Activated T-helper 1 cell treated with anti-CD3 and anti-CD28 coated beads, Interleukin-12 subunit alpha, Interleukin-12 subunit beta, Interleukin-2, Interleukin-4 antibody, amounts not matched to agents 30 ng/mL and 10 ng/mL and 1 ng/mL, durations not matched to agents 14 hours and 24 hours and 36 hours (primary cell): ENCODE measurements at regions of chr15 and their contacts with region 1.

Region 1: DNA sequence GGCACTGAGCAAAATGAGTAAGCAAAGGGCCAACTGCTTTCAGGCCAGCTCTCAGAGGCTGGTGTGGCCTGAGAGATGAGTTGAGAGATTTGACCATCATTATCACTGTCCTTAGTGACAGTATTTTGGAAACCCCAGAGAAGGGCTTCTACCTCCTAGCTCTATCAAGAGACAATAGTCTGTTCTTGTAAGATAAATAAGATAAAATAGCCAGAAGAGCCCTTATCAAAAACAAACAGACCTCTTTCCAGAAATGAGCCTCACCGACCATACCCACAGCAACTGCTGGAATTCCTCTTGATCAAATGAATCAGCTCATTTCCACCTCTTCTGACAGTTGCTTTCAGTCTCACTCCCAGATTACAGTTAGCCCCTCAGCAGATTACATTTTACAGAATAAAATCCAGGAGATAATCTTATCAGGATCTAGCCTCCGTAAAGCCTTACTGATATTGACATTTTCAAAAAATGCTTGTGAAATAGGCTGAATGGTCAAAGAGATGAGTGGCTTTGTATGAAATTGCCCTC is 4.5 kb downstream of the HDC start:
- DNase-seq: no peak
- H3K4me3 Mint-ChIP-seq: peak overlapping the region; percentile 66
- H3K27ac Mint-ChIP-seq: peak overlapping the region; percentile 98
- H3K4me1 Mint-ChIP-seq: peaks cover 79% of the 10 kb centered on the region
- H3K27me3 Mint-ChIP-seq: no peaks in the 10 kb centered on the region

Region 2: GRCh38 chr15:49282366-49282765 is 978.7 kb before region 1 on chr15:
- intact Hi-C with region 1: loop called (anchors 5 kb)
- DNase-seq: no peak
- H3K4me3 Mint-ChIP-seq: no peak overlapping the region
- H3K27ac Mint-ChIP-seq: no peak overlapping the region
- H3K4me1 Mint-ChIP-seq: peaks cover 24% of the 10 kb centered on the region
- H3K27me3 Mint-ChIP-seq: no peaks in the 10 kb centered on the region

Region 3: DNA sequence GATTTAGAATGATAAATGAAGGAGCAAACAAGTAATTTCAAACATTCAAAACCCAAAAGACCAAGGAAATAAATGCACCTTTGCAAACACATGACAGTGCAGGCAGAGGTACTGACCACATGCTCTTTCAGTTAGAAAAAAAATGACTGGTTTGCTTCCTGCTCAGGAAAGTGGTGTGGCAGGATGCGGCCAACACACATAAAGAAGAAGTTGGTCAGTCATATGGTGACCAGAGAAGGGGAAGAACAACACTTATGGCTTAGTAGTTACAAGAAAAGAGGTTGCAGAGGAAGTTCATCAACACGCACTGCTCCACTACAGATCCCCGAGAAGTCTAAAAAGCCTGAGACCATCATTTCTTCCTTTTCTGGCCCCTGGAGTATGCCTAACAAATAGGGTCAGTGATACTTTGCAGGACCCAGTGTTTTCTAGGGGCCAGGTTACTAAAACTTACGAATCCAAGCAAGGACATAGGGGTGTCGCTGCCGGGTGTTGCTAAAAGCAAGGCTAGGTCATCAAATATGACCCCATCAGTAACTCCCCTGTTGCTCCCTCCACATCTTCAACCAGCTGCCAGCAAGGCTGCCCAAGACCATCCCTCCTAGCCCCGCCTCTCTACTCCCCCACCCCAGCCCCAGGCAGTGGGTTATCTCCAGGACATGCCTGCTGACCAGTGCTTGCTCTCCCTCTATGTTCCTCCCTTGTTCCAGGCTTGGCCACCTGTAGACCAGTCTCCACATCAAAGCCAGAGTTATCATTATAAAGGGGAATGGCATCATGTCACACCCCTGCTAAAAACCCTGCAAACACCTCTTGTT is 153.2 kb before region 1 on chr15:
- intact Hi-C with region 1: loop called (anchors 1 kb)
- DNase-seq: peak; percentile 44
- H3K4me3 Mint-ChIP-seq: peak overlapping the region; percentile 75
- H3K27ac Mint-ChIP-seq: peak overlapping the region; percentile 93
- H3K4me1 Mint-ChIP-seq: peaks cover 93% of the 10 kb centered on the region
- H3K27me3 Mint-ChIP-seq: no peaks in the 10 kb centered on the region

Region 4: DNA sequence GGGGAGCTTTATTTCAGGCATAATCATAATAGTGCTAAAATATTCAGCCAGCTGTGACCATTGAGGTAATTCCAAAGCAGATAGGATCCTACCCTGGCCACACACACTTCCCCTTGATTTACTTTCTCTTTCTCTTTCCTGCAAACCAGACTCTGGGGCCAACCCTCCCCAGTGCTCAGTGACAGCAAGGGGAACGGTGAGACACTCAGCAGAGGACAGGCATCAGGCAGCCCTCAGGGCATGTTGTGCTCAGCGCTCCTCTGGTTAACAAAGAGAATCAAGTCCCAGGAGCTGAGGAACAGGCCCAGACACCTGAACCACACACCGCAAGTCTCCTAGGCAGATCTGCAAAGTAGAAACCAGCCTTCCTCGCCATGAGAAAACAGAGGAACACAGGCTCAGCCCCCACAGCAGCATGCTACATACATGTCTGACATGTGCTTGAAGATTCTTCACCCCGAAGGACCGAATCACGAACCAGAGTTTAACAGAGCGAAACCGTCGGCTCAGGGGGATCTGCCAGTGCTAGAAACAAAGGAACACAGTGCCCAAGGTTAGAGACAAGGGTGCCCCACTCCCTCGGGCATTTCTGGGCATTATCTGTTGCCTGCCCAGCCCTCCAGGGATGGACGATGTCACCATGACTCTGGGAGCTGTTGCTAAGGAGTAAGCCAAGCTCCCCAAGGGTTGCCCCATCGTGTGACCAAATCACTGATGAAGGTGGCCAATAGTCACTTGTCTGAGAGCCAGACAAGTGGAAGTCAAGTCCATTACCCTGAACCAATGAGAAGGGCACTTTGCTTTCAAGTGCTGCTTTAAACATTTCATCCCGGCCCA is 13.0 kb before region 1 on chr15:
- intact Hi-C with region 1: loop called (anchors 1 kb)
- DNase-seq: peak; percentile 59
- H3K4me3 Mint-ChIP-seq: peak overlapping the region; percentile 67
- H3K27ac Mint-ChIP-seq: peak overlapping the region; percentile 97
- H3K4me1 Mint-ChIP-seq: peaks cover 65% of the 10 kb centered on the region
- H3K27me3 Mint-ChIP-seq: no peaks in the 10 kb centered on the region

Region 5: DNA sequence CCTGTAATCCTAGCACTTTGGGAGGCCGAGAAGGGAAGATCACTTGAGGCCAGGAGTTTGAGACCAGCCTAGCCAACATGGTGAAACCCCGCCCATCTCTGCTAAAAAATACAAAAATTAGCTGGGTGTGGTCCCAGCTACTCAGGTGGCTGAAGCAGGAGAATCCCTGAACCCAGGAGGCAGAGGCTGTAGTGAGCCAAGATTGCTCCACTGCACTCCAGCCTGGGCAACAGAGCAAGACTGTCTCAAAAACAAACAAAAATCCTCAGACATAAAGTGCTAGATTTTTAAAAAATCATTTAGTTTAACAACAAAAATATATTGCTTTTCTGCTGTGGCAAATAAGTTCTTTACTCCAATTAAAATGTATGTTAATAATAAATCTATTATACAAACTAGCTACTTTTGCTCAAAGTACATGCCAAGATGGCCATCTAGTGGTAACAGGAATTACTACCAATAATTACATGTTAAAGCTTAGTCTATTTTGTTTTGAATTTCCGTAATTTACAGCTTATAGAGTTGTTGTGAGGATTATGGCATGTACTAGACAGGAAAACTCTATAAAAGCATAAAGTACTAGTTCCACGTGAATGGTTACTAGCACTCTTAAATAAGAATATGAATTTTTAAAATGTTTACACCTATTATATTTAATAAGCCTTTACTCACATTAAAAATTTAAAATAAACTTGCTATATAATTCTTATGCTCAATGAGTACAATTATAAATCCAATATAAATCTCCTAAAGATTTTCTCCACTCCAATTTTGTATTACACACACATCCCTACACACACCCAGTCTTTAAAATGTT is 55.0 kb after region 1 on chr15:
- intact Hi-C with region 1: loop called (anchors 2 kb)
- DNase-seq: no peak
- H3K4me3 Mint-ChIP-seq: no peak overlapping the region
- H3K27ac Mint-ChIP-seq: no peak overlapping the region
- H3K4me1 Mint-ChIP-seq: peaks cover 44% of the 10 kb centered on the region
- H3K27me3 Mint-ChIP-seq: no peaks in the 10 kb centered on the region

Region 6: DNA sequence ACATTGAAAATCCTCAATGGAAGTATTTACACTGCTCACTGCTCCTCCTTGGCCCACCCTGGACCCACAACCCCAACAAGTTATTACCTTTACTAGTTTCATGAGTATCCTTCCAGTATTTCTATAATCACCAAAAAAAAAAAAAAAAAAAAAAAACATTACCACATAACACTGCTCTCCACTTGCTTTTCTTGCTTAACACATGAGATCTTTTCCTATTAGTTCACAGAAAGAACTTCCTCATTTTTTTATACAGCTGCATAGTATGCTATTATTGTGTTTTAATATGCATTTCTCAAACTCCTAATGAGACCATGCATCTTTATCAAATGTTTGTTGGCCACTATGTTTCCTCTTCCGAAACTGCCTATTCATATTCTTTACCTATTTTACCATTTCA is 79.4 kb after region 1 on chr15:
- intact Hi-C with region 1: no loop called
- DNase-seq: no peak
- H3K4me3 Mint-ChIP-seq: no peak overlapping the region
- H3K27ac Mint-ChIP-seq: no peak overlapping the region
- H3K4me1 Mint-ChIP-seq: peaks cover 28% of the 10 kb centered on the region
- H3K27me3 Mint-ChIP-seq: no peaks in the 10 kb centered on the region

Region 7: DNA sequence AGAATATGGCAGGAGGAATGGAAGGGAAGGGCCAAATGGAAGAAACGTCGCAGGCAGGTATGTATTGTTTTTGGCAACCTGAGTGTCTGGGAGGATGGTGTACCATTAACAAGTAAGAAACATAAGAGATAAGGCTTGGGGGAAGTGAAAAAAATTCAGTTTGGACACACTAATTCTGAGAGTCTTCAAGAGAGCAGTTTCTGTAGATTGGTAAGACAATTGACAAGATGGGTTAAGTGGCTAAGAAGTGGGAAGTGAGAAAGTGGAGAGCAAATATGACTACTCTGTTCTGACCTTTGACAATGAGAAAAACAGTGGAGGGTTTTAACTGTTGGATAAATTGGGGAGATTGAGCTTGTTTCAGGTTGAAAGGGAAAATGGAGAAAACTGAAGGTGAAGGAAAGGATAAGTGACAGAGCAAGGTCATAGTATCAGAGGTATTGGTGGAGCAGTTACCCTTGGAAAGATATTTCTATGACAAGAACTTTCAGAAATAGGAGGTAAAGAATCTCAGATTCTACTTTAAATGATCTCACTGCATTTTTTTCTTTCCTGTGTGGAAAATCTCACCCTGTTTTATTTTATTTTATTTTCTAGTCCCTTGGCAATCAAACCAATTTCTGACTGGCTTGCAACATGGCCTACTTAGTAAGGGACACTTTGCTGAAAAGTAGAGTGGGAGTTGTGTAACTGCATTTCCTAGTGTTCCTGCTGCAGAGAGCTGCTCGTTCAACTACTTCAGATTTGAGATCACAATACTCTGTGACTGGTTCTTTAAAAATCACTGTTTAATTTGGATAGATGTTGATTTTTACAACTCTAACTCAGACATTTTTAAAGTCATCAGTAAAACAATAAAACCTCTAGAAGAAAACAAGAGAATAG is 117.1 kb after region 1 on chr15:
- intact Hi-C with region 1: loop called (anchors 1 kb)
- DNase-seq: no peak
- H3K4me3 Mint-ChIP-seq: peak overlapping the region; percentile 44
- H3K27ac Mint-ChIP-seq: peak overlapping the region; percentile 92
- H3K4me1 Mint-ChIP-seq: peaks cover 18% of the 10 kb centered on the region
- H3K27me3 Mint-ChIP-seq: no peaks in the 10 kb centered on the region